ENCODE measurements at regions of chr6 and their contacts with region 1.

Region 1: GRCh38 chr6:96897383-96898240 is at the start of gene NDUFAF4:
- DNase-seq: peak; percentile 98
- H3K4me3 ChIP-seq: peak within 1 kb of the TSS; percentile 86 to 93 (median 92)
- H3K27ac ChIP-seq: peak within 1 kb of the TSS; percentile 89 to 95 (median 92)
- H3K4me1 ChIP-seq: peaks cover 2 to 41% (median 31%) of the 10 kb centered on the region in 4 donors
- H3K27me3 ChIP-seq: no peaks in the 10 kb centered on the region
- CTCF ChIP-seq: peak; percentile 84 to 93 (median 91)
- EP300 ChIP-seq: no peak
- POLR2A ChIP-seq: peak; percentile 53 to 55
- total RNA-seq, gene NDUFAF4: 15.1 to 32.1 (median 26.2) TPM

Region 2: GRCh38 chr6:96521644-96522464 is 375.8 kb before region 1 on chr6 and contains the start of gene UFL1:
- intact Hi-C with region 1: loop called (anchors 2 kb)
- DNase-seq: peak; percentile 97
- H3K4me3 ChIP-seq: peak within 1 kb of the TSS; percentile 57 to 87 (median 82)
- H3K27ac ChIP-seq: peak within 1 kb of the TSS; percentile 89 to 96 (median 92)
- H3K4me1 ChIP-seq: peaks cover 0 to 30% (median 22%) of the 10 kb centered on the region in 4 donors
- H3K27me3 ChIP-seq: no peaks in the 10 kb centered on the region
- CTCF ChIP-seq: no peak
- EP300 ChIP-seq: no peak
- POLR2A ChIP-seq: peak; percentile 85 to 89
- total RNA-seq, gene UFL1: 21.9 to 30.1 (median 27.6) TPM

Region 3: DNA sequence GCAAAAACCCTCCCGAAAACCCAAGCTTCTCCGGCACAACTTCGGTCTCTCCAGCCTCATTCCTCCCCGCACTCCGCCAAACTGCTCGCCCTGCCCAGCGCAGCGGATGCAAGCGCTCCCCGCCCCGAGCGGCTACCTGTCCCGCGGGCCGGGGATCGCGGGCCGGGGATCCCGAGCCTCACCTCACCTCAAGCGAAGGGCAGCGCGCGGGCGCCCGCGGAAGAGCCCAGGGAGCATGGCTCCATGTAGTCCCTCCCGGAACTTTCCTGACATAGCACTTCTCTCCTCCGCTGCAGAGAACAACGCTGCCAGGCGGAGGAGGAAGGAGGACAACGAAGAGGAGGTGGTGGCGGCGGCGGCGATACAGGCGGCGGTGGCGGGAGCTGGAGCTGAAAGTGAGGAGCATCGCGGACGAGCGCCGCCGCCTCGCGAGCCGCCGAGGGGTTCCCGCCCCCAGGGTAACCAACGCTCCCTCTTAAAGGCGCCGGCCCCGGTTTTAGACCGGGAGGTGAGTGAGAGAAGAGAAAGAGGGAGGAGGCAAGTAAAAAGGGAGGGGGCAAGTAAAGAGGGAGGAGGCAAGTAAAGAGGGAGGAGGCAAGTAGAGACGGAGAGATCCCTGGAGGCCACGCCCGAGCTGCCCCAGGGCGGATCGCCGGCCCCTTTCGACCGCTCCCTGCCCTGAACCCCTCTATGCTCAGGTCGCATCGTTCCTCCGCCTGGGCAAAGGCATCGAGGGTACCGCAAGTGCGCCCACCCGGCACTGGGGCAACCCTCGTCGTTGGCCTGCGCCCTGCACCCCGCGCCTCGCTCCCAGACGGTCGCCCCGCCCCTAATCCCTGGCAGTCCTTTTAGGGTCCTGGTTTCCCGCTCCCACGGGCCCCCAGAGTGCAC is 60.3 kb before region 1 on chr6 and contains the start of gene GPR63:
- intact Hi-C with region 1: loop called (anchors 1 kb)
- DNase-seq: peak; percentile 87
- H3K4me3 ChIP-seq: peak within 1 kb of the TSS; percentile 65 to 74 (median 70)
- H3K27ac ChIP-seq: peak within 1 kb of the TSS; percentile 59 to 69 (median 64)
- H3K4me1 ChIP-seq: peaks cover 0 to 15% (median 11%) of the 10 kb centered on the region in 4 donors
- H3K27me3 ChIP-seq: no peaks in the 10 kb centered on the region
- CTCF ChIP-seq: no peak
- EP300 ChIP-seq: no peak
- POLR2A ChIP-seq: no peak
- total RNA-seq, gene GPR63: 0.83 to 1.8 (median 1.3) TPM

Region 4: GRCh38 chr6:96923871-96924493 is 26.4 kb after region 1 on chr6:
- intact Hi-C with region 1: loop called (anchors 1 kb)
- DNase-seq: no peak
- H3K4me3 ChIP-seq: peak overlapping the region; percentile 56 to 78 (median 70)
- H3K27ac ChIP-seq: peak overlapping the region; percentile 70 to 83 (median 80)
- H3K4me1 ChIP-seq: peaks cover 0 to 11% (median 5%) of the 10 kb centered on the region in 4 donors
- H3K27me3 ChIP-seq: no peaks in the 10 kb centered on the region
- CTCF ChIP-seq: no peak
- EP300 ChIP-seq: no peak
- POLR2A ChIP-seq: no peak

Region 5: GRCh38 chr6:97059473-97059872 is 161.9 kb after region 1 on chr6:
- intact Hi-C with region 1: loop called (anchors 2 kb)
- DNase-seq: no peak
- H3K4me3 ChIP-seq: no peak overlapping the region
- H3K27ac ChIP-seq: no peak overlapping the region
- H3K4me1 ChIP-seq: no peaks in the 10 kb centered on the region
- H3K27me3 ChIP-seq: no peaks in the 10 kb centered on the region
- CTCF ChIP-seq: peak in 3 of 4 experiments; percentile 22 to 45 (median 29)
- EP300 ChIP-seq: no peak
- POLR2A ChIP-seq: no peak

Region 6: DNA sequence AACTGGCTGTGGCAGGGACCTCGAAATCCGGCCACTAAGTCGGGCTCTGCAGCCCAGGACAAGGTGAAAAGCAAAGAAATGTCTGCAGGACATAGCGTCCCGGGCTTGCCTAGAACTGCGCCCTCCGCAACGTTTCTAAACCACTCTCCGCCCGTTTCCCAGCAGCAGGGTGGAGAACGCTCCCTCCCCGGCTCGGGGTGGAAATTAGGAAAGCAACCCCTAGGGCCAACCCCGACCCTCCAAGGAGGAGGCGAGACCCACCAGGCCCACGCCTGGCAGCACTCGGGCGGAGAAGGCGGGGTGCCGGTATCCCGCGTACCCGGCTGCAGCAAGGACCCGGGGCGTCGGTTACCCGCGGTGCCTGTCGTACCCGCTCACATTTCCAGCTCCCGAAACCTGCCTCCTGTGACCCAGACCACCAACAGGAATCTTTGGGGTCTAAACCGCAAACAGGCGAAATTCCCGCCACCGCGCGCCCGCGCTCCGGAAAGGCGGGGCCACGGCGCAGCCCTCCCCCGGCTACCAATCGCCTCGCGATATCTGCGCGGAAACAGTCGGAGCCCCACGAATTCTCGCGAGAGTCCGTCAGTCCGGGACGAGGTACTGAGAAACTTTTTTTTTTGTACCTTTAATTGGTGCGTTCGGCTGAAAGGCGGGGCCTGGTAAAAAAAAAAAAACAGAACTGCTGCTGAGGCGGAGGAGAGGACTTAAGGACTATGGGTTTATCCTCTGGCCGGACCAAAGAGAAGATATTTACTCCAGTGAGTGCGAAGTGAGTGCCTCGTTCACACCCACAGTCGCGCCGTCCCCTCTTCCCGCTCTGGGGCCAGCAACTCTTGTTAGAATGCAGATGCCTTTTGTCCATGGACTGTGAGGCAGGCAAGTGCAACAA is 385.4 kb after region 1 on chr6 and contains the start of gene MMS22L:
- intact Hi-C with region 1: loop called (anchors 10 kb)
- DNase-seq: peak; percentile 96
- H3K4me3 ChIP-seq: peak within 1 kb of the TSS; percentile 82 to 98 (median 90)
- H3K27ac ChIP-seq: peak within 1 kb of the TSS; percentile 71 to 83 (median 78)
- H3K4me1 ChIP-seq: peaks cover 0 to 17% (median 10%) of the 10 kb centered on the region in 4 donors
- H3K27me3 ChIP-seq: no peaks in the 10 kb centered on the region
- CTCF ChIP-seq: no peak
- EP300 ChIP-seq: no peak
- POLR2A ChIP-seq: no peak
- total RNA-seq, gene MMS22L: 5.4 to 9.7 (median 6.7) TPM